Right ventricle myocardium inferior (tissue), 1 donor: ENCODE measurements at regions of chr9 and their contacts with region 1.

Region 1: GRCh38 chr9:117704024-117704575 is at the start of gene TLR4:
- DNase-seq: peak; percentile 90
- ATAC-seq: peak; percentile 87
- total RNA-seq, gene TLR4: 16.8 TPM

Region 2: GRCh38 chr9:117644133-117644931 is 59.8 kb before region 1 on chr9:
- intact Hi-C with region 1: loop called (anchors 5 kb)
- DNase-seq: peak; percentile 81
- ATAC-seq: peak; percentile 72

Region 3: GRCh38 chr9:117678871-117679270 is 25.2 kb before region 1 on chr9:
- intact Hi-C with region 1: loop called (anchors 1 kb)
- DNase-seq: no peak
- ATAC-seq: no peak

Region 4: DNA sequence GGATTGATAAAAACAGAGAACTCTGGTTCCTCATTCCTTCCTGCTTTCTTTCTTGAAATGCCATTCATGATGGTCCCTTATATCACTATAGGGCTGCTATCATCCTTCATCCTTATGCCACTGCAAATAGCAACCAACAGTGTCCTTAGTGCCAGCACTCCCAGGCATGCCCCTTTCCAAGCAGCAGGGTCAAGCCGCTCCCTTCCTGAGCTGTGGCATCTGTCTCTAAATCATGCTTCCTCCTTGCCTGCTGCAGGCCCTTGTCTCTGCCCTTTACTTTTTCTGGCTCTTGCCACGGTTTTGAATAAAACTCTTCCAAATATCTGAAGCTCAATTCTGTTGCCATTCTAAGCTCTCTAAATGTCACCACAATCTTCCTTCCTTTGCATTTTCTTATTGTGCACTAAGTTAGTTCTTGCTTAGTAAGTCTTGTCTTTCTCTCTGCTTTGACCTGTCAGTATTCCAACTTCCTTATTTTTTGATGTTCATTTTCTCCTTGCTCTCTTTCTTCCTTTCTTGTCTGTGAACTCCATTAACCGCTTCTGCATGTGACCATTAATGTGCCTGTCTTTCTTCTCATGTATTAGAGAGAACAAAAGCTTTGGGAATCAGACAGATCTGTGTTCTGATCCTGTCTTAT is 20.0 kb after region 1 on chr9:
- intact Hi-C with region 1: loop called (anchors 2 kb)
- DNase-seq: no peak
- ATAC-seq: no peak

Region 5: GRCh38 chr9:117734523-117735314 is 30.6 kb after region 1 on chr9:
- intact Hi-C with region 1: no loop called
- DNase-seq: no peak
- ATAC-seq: no peak

Region 6: DNA sequence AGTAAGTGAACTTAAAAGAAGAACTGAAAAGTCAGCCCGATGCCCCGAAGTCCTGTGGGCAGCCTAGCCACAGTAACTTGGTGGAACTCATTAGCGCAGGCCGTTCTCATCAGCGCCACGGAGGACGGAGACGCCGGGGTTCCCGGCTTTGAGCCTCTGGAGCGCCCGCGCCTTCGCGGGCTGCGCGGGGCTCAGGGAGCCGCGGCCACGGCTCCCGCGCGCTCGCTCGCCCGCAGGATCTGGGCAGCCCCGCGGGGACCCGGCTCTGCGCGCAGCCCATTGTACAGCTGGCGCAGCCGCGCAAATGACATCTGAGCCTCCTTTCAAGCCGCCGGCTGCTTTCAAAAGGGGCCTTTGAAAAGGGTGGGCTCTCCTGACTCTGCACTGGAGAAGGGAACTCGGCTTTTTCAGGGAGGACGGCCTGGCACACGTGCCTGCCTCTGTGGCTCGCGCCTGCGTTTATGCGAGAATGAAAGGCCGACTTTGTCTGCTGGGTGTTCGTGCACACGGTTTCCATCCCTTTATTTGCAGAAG is 40.8 kb after region 1 on chr9:
- intact Hi-C with region 1: loop called (anchors 5 kb)
- DNase-seq: peak; percentile 70
- ATAC-seq: peak; percentile 62